ENCODE measurements at regions of chr11 and their contacts with region 1.

Region 1: GRCh38 chr11:86370922-86371594 is 3.6 kb upstream of the CCDC81 start:
- DNase-seq: peak; percentile 67
- H3K4me3 ChIP-seq: no peak overlapping the region
- H3K27ac ChIP-seq: peak overlapping the region; percentile 18
- H3K4me1 ChIP-seq: peaks cover 20% of the 10 kb centered on the region
- H3K27me3 ChIP-seq: no peaks in the 10 kb centered on the region
- CTCF ChIP-seq: no peak
- POLR2A ChIP-seq: no peak

Region 2: GRCh38 chr11:86386746-86387145 is 15.7 kb after region 1 on chr11:
- CTCF ChIA-PET with region 1: interaction called, 10 read pairs
- POLR2A ChIA-PET with region 1: no interaction called
- dilution Hi-C with region 1: no loop called
- intact Hi-C with region 1: no loop called
- DNase-seq: no peak
- H3K4me3 ChIP-seq: no peak overlapping the region
- H3K27ac ChIP-seq: no peak overlapping the region
- H3K4me1 ChIP-seq: peaks cover 12% of the 10 kb centered on the region
- H3K27me3 ChIP-seq: no peaks in the 10 kb centered on the region
- CTCF ChIP-seq: no peak
- POLR2A ChIP-seq: no peak

Region 3: GRCh38 chr11:86438685-86439084 is 67.6 kb after region 1 on chr11:
- CTCF ChIA-PET with region 1: no interaction called
- POLR2A ChIA-PET with region 1: no interaction called
- dilution Hi-C with region 1: no loop called
- intact Hi-C with region 1: no loop called
- DNase-seq: peak; percentile 56
- H3K4me3 ChIP-seq: no peak overlapping the region
- H3K27ac ChIP-seq: no peak overlapping the region
- H3K4me1 ChIP-seq: peaks cover 7% of the 10 kb centered on the region
- H3K27me3 ChIP-seq: no peaks in the 10 kb centered on the region
- CTCF ChIP-seq: no peak
- POLR2A ChIP-seq: no peak

Measured in endothelial cell of umbilical vein (primary cell).